Pancreas (tissue), 10 donors: ENCODE measurements at regions of chr7 and their contacts with region 1.

Region 1: GRCh38 chr7:130896898-130897514 is 163.0 kb upstream of the KLF14 start:
- DNase-seq: peak in 5 of 6 donors; percentile 50 to 79 (median 70)
- ATAC-seq: peak; percentile 55 to 66 (median 62)
- H3K4me3 ChIP-seq: no peak overlapping the region
- H3K27ac ChIP-seq: peak overlapping the region in 2 of 4 donors; percentile 9 to 57
- H3K4me1 ChIP-seq: peaks cover 10 to 63% (median 38%) of the 10 kb centered on the region in 3 donors
- H3K27me3 ChIP-seq: no peaks in the 10 kb centered on the region
- CTCF ChIP-seq: peak; percentile 57 to 67 (median 62)

Region 2: GRCh38 chr7:130966246-130967009 is 69.4 kb after region 1 on chr7:
- intact Hi-C with region 1: no loop called
- DNase-seq: no peak
- ATAC-seq: no peak
- H3K4me3 ChIP-seq: no peak overlapping the region
- H3K27ac ChIP-seq: no peak overlapping the region
- H3K4me1 ChIP-seq: peaks cover 12 to 18% (median 12%) of the 10 kb centered on the region in 3 donors
- H3K27me3 ChIP-seq: no peaks in the 10 kb centered on the region
- CTCF ChIP-seq: no peak

Region 3: DNA sequence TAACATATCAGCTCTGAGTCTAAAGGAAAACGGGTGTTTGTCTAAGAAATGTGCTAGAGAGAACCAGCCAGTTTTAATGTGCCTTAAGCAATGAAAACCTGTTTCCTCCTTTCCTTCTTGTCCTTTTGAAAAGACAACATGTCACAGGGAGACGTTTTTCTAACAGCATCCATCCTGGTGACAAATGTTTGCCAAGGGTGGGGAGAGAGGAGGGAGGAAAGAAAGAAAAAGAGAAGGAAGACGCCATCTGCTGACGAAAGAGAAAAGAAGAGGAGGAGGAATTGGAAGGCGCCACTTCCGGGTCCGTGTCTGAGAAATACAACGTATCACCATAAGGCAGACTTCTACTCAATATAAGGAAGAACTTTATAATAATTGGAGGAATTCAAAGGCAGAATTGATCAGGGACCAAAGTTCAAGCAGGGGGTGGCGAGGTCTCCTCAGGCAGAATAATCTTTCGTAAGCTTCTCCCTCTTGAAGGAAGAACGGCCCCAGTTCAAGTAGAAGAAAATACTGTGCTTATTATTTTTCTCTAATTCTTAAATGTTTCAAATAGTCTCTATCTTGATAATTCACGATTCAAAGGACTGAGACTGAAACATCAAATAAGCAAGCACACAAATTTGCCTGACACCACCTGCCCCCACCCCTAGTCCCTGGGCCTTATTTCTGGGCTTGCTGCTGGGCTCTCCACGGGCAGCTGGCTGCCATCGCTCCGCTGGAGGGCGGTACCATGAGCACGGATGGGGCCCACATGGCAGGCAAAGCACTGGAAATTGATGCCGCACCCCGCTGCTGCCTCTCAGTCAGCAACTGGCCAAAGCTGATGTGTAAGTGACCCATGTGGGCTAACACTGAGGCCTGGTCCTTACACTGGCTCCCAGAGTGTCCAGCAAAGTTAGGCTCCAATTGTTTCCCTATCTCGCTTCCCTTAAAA is 110.7 kb after region 1 on chr7:
- intact Hi-C with region 1: loop called in 1 of 3 experiments (anchors 5 kb)
- DNase-seq: peak in 3 of 6 donors; percentile 45 to 64 (median 55)
- ATAC-seq: peak; percentile 70 to 86 (median 84)
- H3K4me3 ChIP-seq: no peak overlapping the region
- H3K27ac ChIP-seq: peak overlapping the region in 3 of 4 donors; percentile 28 to 73 (median 68)
- H3K4me1 ChIP-seq: peaks cover 0 to 45% (median 28%) of the 10 kb centered on the region in 3 donors
- H3K27me3 ChIP-seq: no peaks in the 10 kb centered on the region
- CTCF ChIP-seq: peak in 3 of 4 donors; percentile 8 to 27 (median 14)

Region 4: GRCh38 chr7:131045526-131045925 is 148.5 kb after region 1 on chr7:
- intact Hi-C with region 1: loop called in 1 of 3 experiments (anchors 5 kb)
- DNase-seq: no peak
- ATAC-seq: no peak
- H3K4me3 ChIP-seq: no peak overlapping the region
- H3K27ac ChIP-seq: no peak overlapping the region
- H3K4me1 ChIP-seq: peaks cover 7 to 14% (median 8%) of the 10 kb centered on the region in 3 donors
- H3K27me3 ChIP-seq: no peaks in the 10 kb centered on the region
- CTCF ChIP-seq: no peak